Testis (tissue), 5 donors: ENCODE measurements at regions of chr19 and their contacts with region 1.

Region 1: GRCh38 chr19:4576016-4576933 is 16.8 kb upstream of the SEMA6B start:
- DNase-seq: peak; percentile 73
- H3K4me3 ChIP-seq: no peak overlapping the region
- H3K27ac ChIP-seq: no peak overlapping the region
- H3K4me1 ChIP-seq: peaks cover 6% of the 10 kb centered on the region
- H3K27me3 ChIP-seq: no peaks in the 10 kb centered on the region
- CTCF ChIP-seq: peak; percentile 36 to 67 (median 63)
- POLR2A ChIP-seq: no peak

Region 2: DNA sequence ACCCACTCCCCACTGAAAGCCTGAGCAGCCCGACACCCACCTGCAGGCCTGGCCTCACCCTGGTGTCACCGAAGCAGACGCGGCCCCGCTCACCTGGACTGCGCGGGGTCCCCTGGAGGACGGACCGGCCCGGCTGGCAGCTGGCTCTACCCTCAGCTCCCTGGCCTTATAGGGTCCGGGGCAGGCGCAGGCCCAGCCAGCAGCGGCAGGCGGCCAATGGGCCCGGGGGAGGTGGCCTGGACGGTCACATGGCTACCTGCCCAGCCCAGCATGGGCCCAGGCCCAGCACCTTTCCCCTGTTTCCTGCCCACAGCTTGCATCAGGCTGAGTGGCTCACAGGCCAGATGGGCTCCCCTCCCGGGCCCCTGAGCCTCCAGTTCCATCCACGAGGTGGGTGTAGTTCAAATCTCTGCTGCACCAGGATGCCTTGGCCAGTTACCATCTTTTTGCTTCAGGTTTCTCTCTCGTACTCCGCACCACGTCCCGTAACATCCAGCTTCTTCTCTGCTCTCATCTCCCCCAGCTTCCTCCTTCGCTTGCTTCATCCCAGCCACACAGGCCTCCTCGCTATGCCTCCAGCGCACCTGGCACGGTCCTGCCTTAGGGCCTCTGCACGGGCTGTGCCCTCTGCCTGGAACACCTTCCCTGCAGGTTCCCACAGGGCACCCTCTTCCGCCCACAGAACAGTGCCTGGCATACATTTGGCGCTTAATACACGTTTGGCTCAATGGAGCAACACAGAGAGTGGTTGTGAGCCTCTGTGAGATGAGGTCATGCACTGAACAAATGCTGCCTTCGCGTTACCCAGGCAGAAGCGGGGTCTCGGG is 57.7 kb before region 1 on chr19 and contains the start of gene PLIN4:
- intact Hi-C with region 1: no loop called
- DNase-seq: peak; percentile 66
- H3K4me3 ChIP-seq: no peak within 1 kb of the TSS
- H3K27ac ChIP-seq: no peak within 1 kb of the TSS
- H3K4me1 ChIP-seq: peaks cover 10% of the 10 kb centered on the region
- H3K27me3 ChIP-seq: no peaks in the 10 kb centered on the region
- CTCF ChIP-seq: no peak
- POLR2A ChIP-seq: no peak
- total RNA-seq, gene PLIN4: 2.8 to 3.7 TPM

Region 3: DNA sequence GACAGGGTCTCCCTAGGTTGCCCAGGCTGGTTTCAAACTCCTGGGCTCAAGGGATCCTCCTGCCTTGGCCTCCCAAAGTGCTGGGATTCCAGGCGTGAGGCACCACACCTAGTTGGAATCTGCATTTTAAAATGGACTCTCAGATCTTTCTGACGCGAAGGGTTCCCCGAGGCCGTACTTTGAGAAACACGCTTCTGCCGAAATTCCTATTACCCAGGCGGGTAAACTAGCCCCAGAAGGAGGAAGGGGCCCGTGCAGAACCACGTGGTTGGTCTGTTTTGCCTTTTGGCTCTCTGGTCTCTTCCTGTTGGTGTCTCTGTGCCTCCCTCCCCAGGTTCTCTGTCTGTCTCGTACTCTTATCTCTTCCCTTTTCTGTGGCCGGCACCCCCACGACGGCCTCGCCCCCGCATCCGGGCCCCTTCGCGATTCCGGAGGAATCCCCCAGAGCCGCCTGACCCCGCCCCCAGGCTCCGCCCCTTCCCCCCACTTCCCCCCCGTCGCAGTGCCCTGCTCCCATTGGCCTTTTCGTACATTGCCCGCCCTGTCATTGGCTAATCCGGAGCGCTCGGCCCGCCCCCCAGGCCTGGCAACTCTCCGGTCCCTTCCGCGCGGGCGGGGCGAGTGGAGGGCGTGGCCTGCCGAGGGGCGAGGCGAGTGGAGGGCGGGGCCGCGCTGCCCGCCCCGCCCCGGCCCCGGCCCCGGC is 62.7 kb after region 1 on chr19 and contains the start of gene TNFAIP8L1:
- intact Hi-C with region 1: loop called (anchors 5 kb)
- DNase-seq: peak; percentile 97
- H3K4me3 ChIP-seq: peak within 1 kb of the TSS; percentile 63 to 68
- H3K27ac ChIP-seq: peak within 1 kb of the TSS in 1 of 2 donors; percentile 42
- H3K4me1 ChIP-seq: peaks cover 13% of the 10 kb centered on the region
- H3K27me3 ChIP-seq: no peaks in the 10 kb centered on the region
- CTCF ChIP-seq: no peak
- POLR2A ChIP-seq: no peak
- total RNA-seq, gene TNFAIP8L1: 9.7 to 15.9 TPM